Activated naive CD8-positive, alpha-beta T cell treated with anti-CD3 and anti-CD28 coated beads, Interleukin-2, amount 10 ng/mL, durations not matched to agents 7 days and 5 days (primary cell): ENCODE measurements at regions of chr9 and their contacts with region 1.

Region 1: GRCh38 chr9:133683586-133684120 is 47.5 kb downstream of the DBH start:
- DNase-seq: peak; percentile 77
- ATAC-seq: peak; percentile 89
- H3K4me3 Mint-ChIP-seq: peak overlapping the region; percentile 87
- H3K27ac Mint-ChIP-seq: peak overlapping the region; percentile 100
- H3K4me1 Mint-ChIP-seq: peaks cover 13% of the 10 kb centered on the region
- H3K27me3 Mint-ChIP-seq: no peaks in the 10 kb centered on the region

Region 2: DNA sequence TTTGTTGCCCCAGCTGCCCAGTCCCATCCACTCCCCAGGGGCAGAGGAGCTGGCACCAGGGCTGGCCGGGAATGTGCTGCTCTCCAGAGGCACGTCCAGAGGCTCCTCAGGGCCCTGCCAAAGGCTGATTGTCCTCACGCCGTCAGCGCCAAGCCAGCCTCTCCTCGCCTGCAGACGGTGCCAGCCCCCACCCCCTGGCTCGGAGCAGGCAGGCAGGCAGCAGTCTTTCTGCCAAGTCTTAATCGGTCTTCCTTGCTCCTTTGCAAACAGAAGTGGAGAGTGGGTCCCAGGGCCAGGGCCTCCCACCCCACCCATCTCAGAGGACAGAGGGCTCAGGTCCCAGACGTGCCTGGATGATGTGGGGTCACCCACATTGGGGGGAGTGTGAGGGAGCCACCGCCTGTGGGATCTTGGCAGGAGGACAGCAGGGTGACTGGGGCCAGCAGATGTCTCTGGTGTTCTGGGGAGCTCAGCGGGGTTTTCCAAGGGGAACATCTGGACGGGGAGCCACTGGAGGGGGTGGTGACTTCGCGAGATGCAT is 110.8 kb before region 1 on chr9:
- POLR2A ChIA-PET with region 1: no interaction called
- DNase-seq: no peak
- ATAC-seq: no peak
- H3K4me3 Mint-ChIP-seq: no peak overlapping the region
- H3K27ac Mint-ChIP-seq: no peak overlapping the region
- H3K4me1 Mint-ChIP-seq: peaks cover 2% of the 10 kb centered on the region
- H3K27me3 Mint-ChIP-seq: peaks cover 5% of the 10 kb centered on the region

Region 3: GRCh38 chr9:133673258-133673655 is 10.4 kb before region 1 on chr9:
- POLR2A ChIA-PET with region 1: interaction called, 11 read pairs
- DNase-seq: no peak
- ATAC-seq: no peak
- H3K4me3 Mint-ChIP-seq: no peak overlapping the region
- H3K27ac Mint-ChIP-seq: no peak overlapping the region
- H3K4me1 Mint-ChIP-seq: peaks cover 24% of the 10 kb centered on the region
- H3K27me3 Mint-ChIP-seq: no peaks in the 10 kb centered on the region

Region 4: GRCh38 chr9:133701862-133702797 is 18.5 kb after region 1 on chr9:
- POLR2A ChIA-PET with region 1: interaction called, 38 read pairs
- DNase-seq: peak; percentile 70
- ATAC-seq: peak; percentile 89
- H3K4me3 Mint-ChIP-seq: peak overlapping the region; percentile 75
- H3K27ac Mint-ChIP-seq: peak overlapping the region; percentile 87
- H3K4me1 Mint-ChIP-seq: peaks cover 21% of the 10 kb centered on the region
- H3K27me3 Mint-ChIP-seq: peaks cover 7% of the 10 kb centered on the region

Region 5: GRCh38 chr9:133715866-133716563 is 32.4 kb after region 1 on chr9:
- POLR2A ChIA-PET with region 1: interaction called, 10 read pairs
- DNase-seq: peak; percentile 50
- ATAC-seq: peak; percentile 47
- H3K4me3 Mint-ChIP-seq: no peak overlapping the region
- H3K27ac Mint-ChIP-seq: no peak overlapping the region
- H3K4me1 Mint-ChIP-seq: peaks cover 3% of the 10 kb centered on the region
- H3K27me3 Mint-ChIP-seq: peaks cover 2% of the 10 kb centered on the region

Region 6: DNA sequence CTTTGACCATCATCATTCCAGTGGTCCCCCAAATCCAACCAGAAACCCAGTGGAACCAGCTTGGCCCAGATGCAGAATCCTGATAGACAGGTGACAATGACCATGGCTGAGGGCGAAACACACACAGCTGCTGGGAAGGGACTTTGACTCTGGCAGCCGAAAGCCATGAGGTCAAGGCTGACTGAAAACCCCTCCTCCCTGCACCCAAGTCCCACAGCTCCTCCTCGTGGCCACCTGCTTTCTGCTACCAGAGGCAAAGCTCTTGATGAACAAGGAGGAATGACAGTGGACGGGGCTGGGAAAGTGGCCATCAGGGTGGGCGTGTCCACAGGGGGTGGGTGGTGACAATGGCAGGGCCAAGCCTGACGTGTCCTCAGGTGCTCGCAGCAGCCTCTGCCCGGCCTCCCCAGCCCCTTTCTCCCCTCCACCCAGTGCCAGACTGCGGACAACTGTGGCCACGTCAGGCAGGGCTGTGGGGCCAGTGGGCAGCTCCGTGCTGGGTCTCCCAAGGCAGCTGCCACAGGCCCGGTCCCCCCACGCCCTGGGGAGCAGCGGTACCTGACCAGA is 85.3 kb after region 1 on chr9:
- POLR2A ChIA-PET with region 1: no interaction called
- DNase-seq: peak; percentile 19
- ATAC-seq: no peak
- H3K4me3 Mint-ChIP-seq: no peak overlapping the region
- H3K27ac Mint-ChIP-seq: no peak overlapping the region
- H3K4me1 Mint-ChIP-seq: no peaks in the 10 kb centered on the region
- H3K27me3 Mint-ChIP-seq: peaks cover 7% of the 10 kb centered on the region